ENCODE measurements at regions of chr6 and their contacts with region 1.

Region 1: DNA sequence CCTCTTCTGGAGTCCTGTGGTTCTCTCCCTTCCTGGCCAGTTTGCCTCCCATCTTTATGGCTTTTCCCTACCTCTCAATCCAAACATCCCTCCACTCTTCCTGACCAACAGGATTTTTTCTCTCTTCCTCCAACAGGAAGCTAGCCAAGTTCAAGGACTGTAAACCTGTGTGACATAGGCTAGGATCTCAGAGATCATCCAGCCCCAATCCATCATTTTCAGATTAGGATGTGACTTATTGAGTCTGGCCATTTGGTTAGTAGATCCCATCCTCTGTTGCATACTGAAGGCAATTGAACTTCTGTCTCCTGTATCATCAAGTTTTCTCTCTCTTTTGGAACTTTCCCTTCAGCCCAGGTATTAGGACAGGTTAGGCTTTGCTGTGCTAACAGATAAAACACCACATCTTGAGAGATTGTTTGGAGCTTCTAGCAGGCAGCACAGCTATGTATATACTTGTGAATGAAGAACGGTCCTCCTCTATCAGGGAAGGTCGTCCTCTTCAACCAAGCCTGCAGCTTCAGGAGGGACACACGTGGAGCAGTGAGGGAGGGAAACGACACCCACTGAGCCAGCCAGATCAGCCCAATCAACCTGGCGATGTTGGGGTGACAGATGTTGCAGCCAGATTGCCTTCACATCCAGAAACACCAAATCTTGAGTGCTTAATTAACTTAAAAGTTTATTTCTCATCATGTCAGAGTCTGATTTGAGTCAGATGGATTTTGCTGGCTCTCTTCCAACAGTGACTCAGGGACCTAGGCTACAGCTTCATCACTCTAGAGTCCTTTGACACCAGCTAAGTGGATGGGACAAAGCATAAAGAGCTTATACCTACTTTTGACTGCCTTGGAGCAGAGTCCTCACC is 106.8 kb downstream of the GJA10 start:
- DNase-seq: no peak
- H3K4me3 Mint-ChIP-seq: no peak overlapping the region
- H3K27ac Mint-ChIP-seq: no peak overlapping the region
- H3K4me1 Mint-ChIP-seq: peaks cover 12% of the 10 kb centered on the region
- H3K27me3 Mint-ChIP-seq: no peaks in the 10 kb centered on the region

Region 2: GRCh38 chr6:89977808-89978748 is 23.0 kb before region 1 on chr6:
- intact Hi-C with region 1: loop called (anchors 2 kb)
- DNase-seq: no peak
- H3K4me3 Mint-ChIP-seq: no peak overlapping the region
- H3K27ac Mint-ChIP-seq: no peak overlapping the region
- H3K4me1 Mint-ChIP-seq: peaks cover 16% of the 10 kb centered on the region
- H3K27me3 Mint-ChIP-seq: no peaks in the 10 kb centered on the region

Measured in activated CD4-positive, alpha-beta T cell treated with anti-CD3 and anti-CD28 coated beads, Interleukin-2, amount 10 ng/mL, durations not matched to agents 24 days and 14 days (primary cell).